ENCODE measurements at regions of chr11 and their contacts with region 1.

Region 1: GRCh38 chr11:61477727-61478148 is 30.8 kb upstream of the LRRC10B start:
- DNase-seq: no peak
- H3K4me3 ChIP-seq: no peak overlapping the region
- H3K27ac ChIP-seq: no peak overlapping the region
- H3K4me1 ChIP-seq: peaks cover 8% of the 10 kb centered on the region
- H3K27me3 ChIP-seq: no peaks in the 10 kb centered on the region
- CTCF ChIP-seq: peak; percentile 73 to 95

Region 2: DNA sequence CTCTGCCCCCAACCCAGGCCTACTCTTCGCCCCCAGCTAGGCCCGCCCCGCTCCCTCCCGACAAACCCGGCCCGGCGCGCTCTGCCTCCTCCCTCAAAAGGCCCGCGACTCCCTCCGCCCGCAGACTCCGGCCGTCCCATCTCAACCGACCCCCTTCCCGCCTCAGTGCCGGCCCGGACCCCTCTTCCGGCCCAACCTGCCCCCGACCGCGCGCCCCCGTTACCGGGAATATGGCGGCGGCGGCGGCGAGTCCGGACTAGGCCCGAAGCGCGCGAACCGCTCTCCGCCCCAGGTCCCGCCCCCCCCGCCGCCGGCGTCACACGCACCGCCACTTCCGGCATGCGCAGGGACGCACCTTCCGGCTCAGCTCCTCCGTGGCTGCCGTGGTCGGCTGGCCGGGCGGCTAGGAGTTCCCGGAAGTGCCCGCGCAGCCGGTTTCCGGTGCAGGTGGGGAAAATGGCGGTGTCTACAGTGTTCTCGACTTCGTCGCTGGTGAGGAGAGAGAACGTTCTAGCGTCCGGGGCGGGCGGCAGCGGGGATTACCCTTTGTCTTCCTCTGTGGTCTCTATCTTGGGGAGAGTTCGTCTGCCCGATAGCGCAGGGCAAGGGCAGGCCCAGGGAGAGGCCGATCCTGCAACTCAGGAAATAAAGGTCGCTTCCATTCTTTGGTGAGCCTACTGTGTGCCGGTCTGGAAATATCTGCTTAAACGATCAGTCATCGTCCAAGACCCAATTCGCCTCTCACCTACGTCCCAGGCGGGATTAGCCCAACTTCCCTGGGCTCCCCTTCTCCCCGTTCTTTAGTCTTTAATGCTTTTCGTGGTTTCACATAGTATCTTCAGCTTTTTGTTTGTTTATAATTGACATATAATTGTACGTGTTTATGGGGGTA is 47.8 kb before region 1 on chr11 and contains the starts of genes CPSF7 and SDHAF2:
- CTCF ChIA-PET with region 1: no interaction called
- dilution Hi-C with region 1: no loop called
- in situ Hi-C with region 1: no loop called
- intact Hi-C with region 1: no loop called
- DNase-seq: peak; percentile 96
- H3K4me3 ChIP-seq: peak within 1 kb of the TSS; percentile 58 to 93 (median 78)
- H3K27ac ChIP-seq: peak within 1 kb of the TSS; percentile 77
- H3K4me1 ChIP-seq: peaks cover 23% of the 10 kb centered on the region
- H3K27me3 ChIP-seq: no peaks in the 10 kb centered on the region
- CTCF ChIP-seq: no peak
- total RNA-seq, gene CPSF7: 27.2 to 77.7 TPM
- total RNA-seq, gene SDHAF2: 21.7 to 48.2 TPM

Region 3: DNA sequence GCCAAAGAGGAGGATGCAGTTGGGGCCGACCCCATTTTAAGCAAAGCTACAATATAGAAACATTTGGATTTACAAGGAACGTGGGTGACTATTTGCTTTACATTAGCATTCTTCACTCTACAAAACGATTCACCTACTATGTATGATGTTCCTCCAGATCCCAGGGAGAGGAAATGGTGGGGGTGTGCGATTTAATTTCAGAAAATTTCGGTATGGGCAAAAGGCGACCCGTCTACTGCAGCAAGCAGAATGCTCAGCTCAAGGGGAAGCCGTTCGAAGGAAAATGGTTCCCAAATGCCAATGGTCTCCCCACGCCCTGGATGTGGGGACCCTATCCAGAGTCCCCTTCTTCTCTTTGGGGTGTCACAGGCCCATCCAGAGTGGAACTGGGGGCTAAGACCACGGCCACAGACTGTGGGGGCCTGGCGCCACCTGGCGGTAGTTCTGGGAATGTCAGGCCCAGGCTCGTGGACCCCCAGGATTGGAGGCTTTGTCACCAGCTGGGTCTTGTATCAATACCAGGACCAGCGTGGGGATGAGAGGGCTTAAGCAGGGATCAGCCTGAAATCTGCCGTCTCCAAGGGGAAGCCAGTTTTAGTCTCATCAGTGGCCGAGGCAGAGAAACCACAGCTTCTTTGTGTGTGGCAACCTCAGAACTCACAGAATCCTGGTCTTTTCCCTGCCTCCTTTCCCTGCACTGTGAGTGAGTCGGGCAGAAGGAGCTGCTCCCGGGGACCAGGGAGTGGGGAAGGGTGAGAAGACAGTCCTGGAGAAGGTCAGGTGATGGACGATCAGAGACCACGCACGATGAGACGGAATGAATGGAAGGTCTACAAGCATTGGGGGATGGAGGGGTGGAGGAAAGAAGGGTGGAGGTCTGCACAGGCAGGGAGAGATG is 39.2 kb after region 1 on chr11:
- CTCF ChIA-PET with region 1: no interaction called
- dilution Hi-C with region 1: no loop called
- in situ Hi-C with region 1: no loop called
- intact Hi-C with region 1: loop called (anchors 1 kb)
- DNase-seq: no peak
- H3K4me3 ChIP-seq: no peak overlapping the region
- H3K27ac ChIP-seq: no peak overlapping the region
- H3K4me1 ChIP-seq: no peaks in the 10 kb centered on the region
- H3K27me3 ChIP-seq: no peaks in the 10 kb centered on the region
- CTCF ChIP-seq: peak; percentile 95 to 98

Region 4: DNA sequence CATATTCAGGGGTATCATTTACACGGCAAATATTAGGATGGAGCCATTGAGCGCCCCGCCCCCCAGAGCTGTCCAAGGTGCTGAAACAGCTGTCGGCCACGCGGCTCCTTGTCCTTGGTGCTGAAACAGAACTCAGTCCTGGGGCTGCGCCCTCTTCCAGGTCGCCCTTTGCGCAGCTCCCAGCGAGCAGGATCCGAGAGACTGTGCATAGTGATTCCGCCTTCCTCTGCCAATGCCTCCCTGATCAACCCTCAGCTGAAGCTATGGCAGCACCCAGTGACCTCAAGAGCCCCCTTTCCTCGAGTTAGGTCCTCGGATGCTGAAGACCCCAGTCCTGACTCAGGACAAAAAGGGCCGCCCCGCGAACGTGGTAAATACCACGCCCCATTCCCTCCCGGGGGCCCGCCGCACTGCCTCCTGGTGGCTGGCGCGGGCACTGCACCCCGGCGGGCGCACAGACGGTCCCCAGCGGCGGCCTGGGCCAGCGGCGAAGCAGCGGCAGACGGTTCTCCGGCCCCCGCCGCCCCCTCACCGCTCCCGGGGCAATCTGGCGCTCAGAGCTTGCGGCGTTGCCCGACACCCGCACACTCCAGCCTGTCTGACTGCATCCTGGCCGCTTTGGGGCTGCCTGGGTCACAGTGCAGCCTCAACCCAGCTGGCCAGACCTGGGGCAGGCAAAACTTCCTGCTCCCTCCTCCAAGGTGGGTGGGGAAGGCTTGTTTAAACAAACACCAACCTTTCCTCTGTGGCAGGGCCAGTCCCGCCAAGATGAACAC is 89.7 kb after region 1 on chr11:
- CTCF ChIA-PET with region 1: no interaction called
- dilution Hi-C with region 1: no loop called
- in situ Hi-C with region 1: no loop called
- intact Hi-C with region 1: loop called (anchors 5 kb)
- DNase-seq: peak; percentile 70
- H3K4me3 ChIP-seq: peak overlapping the region in 1 of 3 experiments; percentile 16
- H3K27ac ChIP-seq: no peak overlapping the region
- H3K4me1 ChIP-seq: no peaks in the 10 kb centered on the region
- H3K27me3 ChIP-seq: no peaks in the 10 kb centered on the region
- CTCF ChIP-seq: peak; percentile 42 to 62

Region 5: DNA sequence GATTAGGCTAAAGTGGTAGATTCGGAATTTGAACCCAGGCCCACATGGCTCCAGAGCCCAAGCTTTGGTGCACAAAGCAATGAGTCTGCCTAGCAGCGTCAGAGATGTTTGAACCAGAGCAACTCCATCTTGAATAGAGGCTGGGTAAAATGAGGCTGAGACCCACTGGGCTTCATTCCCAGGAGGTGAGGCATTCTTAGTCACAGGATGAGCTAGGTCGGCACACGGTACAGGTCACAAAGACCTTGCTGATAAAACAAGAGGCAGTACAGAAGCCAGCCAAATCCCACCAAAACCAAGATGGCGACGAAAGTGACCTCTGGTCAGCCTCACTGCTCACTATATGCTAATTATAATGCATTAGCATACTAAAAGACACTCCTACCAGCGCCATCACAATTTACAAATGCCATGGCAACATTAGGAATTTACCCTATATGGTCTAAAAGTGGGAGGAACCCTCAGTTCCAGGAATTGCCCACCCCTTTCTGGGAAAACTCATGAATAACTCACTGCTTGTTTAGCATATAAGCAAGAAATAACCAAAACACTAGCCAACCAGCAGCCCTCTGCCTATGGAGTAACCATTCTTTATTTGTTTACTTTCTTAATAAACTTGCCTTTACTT is 162.2 kb after region 1 on chr11:
- CTCF ChIA-PET with region 1: no interaction called
- dilution Hi-C with region 1: no loop called
- in situ Hi-C with region 1: loop called (anchors 5 to 10 kb)
- intact Hi-C with region 1: loop called (anchors 1 kb)
- DNase-seq: peak; percentile 32
- H3K4me3 ChIP-seq: no peak overlapping the region
- H3K27ac ChIP-seq: no peak overlapping the region
- H3K4me1 ChIP-seq: no peaks in the 10 kb centered on the region
- H3K27me3 ChIP-seq: no peaks in the 10 kb centered on the region
- CTCF ChIP-seq: no peak

Measured in mammary epithelial cell (primary cell).